ENCODE measurements at regions of chr12 and their contacts with region 1.

Region 1: DNA sequence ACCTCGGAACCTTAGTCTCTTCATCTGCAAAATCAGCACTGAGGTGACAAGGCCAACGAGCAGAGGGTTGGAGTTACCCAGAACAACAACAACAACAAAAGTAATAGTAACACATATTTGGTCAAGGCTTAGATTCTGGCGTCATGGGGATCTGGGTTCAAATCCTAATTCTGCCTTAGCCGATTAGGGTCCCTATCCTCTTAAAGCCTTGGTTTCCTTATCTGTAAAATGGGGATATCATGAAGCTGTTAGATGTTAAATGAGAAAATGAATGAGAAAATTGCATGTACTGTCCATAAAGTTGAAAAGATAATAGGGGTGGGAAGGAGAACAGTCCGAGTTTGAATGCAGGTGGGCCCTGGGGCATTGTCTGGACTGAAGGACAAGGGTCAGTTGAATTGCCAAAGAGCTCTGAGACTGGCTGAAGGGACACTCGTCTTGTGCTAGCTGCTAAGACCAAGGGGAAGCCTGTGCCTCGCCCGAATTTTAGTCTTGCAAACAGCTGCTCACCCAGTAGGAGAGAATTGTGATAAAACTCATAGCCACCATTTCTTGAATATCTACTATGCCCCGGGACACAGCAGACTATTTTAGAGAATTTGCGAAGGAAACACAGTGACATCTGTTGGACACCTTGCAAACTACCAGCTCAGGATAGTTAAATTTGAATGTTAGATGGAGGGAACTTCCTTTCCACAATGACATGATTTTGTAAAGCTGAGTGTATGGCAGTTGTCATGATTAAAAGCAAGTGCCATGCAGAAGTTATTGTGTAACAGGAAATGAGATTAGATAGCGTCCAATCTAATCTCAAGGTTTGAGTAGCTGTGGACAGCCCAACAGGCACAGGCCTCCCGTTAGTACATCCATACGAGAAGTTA is 6.8 kb upstream of the HNF1A start:
- H3K4me3 ChIP-seq: no peak overlapping the region
- H3K27ac ChIP-seq: no peak overlapping the region
- H3K4me1 ChIP-seq: no peaks in the 10 kb centered on the region
- CTCF ChIP-seq: no peak

Region 2: GRCh38 chr12:120640840-120641833 is 330.4 kb before region 1 on chr12:
- CTCF ChIA-PET with region 1: interaction called, 11 read pairs
- POLR2A ChIA-PET with region 1: no interaction called
- H3K4me3 ChIP-seq: peak overlapping the region; percentile 41
- H3K27ac ChIP-seq: peak overlapping the region; percentile 56; the same call in 1 of the 2 replicates
- H3K4me1 ChIP-seq: peaks cover 5% of the 10 kb centered on the region; the same call in 1 of the 2 replicates
- CTCF ChIP-seq: peak; percentile 81

Region 3: GRCh38 chr12:120856980-120857379 is 114.6 kb before region 1 on chr12:
- CTCF ChIA-PET with region 1: interaction called, 11 read pairs
- POLR2A ChIA-PET with region 1: no interaction called
- H3K4me3 ChIP-seq: no peak overlapping the region
- H3K27ac ChIP-seq: no peak overlapping the region
- H3K4me1 ChIP-seq: peaks cover 6% of the 10 kb centered on the region
- CTCF ChIP-seq: no peak

Region 4: DNA sequence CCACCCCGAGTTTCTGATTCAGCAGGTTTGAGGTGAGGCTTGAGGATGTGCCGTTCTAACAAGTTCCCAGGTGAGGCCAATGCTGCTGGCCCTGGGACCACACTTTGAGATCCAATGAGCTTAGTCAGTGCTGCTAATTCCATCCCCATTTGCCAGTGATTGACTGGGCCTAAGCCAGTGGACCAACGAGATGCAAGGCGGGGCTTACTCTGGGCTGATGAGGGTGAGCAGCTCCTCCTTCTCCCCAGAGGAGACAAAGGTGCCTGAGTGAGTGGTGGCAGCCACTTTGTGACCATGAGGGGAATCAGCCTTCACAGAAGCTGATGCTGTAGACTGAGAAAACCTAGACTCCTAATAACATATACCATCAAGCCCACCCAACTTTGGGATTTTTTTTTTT is 16.3 kb before region 1 on chr12:
- CTCF ChIA-PET with region 1: interaction called, 15 read pairs
- POLR2A ChIA-PET with region 1: no interaction called
- H3K4me3 ChIP-seq: no peak overlapping the region
- H3K27ac ChIP-seq: no peak overlapping the region
- H3K4me1 ChIP-seq: no peaks in the 10 kb centered on the region
- CTCF ChIP-seq: no peak

Region 5: DNA sequence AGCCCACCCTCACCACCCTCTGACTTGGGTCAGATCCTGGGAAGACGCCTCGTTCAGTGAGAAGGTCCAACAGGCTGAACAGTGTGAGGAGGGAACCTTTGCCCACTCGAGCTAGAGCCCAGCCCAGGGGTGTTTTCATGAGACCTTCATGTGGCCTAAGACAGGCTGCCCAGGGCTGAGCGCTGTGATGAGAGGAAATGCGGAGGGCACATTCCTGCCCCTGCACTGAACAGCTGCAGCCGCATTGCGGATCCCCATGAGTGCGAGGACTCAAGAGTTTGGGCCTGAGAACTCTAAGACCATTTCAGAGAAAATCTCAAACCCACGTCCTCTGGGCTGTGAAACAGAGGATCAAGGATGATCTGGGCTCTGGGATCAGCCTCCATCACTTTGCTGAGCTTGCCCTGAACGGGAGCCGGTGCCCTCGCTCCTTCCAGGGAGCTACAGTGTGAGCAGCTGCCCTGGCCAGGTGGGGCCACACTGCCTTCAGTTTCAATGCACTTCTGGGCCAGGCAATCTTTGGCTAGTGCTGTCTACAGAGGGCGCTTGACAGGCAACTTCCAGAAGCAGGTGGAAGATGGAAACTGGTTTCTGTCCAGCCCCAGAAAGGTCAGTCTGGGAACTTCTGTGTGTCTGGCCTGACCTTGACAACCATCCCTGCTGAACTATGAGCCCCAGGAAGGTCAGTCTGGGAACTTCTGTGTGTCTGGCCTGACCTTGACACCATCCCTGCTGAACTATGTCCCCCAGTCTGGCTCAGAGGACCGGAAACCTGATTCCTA is 117.7 kb after region 1 on chr12:
- CTCF ChIA-PET with region 1: no interaction called
- POLR2A ChIA-PET with region 1: no interaction called
- H3K4me3 ChIP-seq: no peak overlapping the region
- H3K27ac ChIP-seq: no peak overlapping the region
- H3K4me1 ChIP-seq: no peaks in the 10 kb centered on the region
- CTCF ChIP-seq: no peak

Region 6: DNA sequence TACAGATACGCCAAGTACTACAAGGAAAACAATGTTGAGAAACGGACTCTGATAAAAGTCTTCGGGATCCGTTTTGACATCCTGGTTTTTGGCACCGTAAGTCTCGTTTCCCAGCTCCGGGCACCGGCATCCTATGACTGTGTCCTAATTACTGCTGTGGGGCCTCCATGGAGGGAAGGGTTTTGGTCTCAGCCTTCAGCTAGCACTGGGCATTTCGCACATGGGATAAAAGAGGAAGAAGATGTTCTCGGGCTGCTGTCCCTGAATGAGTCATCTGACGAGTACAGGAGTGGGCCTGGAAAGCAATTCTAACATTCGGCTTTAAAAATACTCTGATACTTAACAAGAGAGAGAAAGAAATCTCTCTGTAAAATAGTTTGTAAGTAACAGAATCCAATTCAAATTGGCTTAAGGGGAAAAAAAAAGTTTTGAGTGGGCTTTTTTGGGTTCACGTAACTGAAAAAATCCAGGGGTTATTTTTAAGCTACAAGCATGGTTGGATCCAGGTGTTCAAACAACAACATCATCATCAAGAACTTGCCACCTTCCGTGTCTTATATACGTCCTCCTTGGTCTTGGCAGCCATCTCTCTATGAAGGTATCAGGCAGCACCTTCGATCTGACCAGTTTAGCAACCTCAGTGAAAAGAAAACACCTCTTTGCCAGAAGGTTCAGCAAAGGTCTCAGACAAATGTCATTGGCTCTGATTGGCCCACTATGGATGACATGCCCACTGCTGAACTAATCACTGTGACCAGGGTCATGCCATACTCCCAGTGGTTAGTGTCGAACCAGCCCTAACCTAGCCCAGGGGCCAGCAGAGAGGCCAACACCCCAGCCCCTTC is 204.1 kb after region 1 on chr12:
- CTCF ChIA-PET with region 1: no interaction called
- POLR2A ChIA-PET with region 1: no interaction called
- H3K4me3 ChIP-seq: no peak overlapping the region
- H3K27ac ChIP-seq: no peak overlapping the region
- H3K4me1 ChIP-seq: no peaks in the 10 kb centered on the region
- CTCF ChIP-seq: no peak